ENCODE measurements at regions of chr1 and their contacts with region 1.

Region 1: DNA sequence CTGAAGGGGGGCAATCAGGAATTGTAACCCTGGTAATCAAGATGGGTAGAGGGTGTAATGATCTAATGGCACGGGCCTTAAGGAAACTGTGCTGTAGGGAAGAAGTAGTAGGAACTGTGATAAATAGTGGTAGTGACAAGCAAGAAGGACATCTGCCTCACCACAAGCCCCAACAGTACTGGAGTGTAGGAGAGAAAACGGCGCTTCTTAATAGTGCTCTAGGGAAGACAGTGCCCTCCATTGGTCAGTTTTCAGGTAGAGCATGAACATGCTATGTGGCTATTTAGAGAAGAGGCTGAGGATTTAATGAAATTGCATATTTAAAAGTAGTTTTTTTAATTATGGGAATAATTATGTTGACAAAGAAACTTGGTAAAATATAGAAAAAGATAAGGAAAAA is 32.2 kb downstream of the SLC30A7 start:
- DNase-seq: no peak
- H3K4me3 ChIP-seq: peak overlapping the region in 1 of 2 donors; percentile 39
- H3K4me3 Mint-ChIP-seq: no peak overlapping the region
- H3K27ac ChIP-seq: peak overlapping the region; percentile 50
- H3K27ac Mint-ChIP-seq: no peak overlapping the region
- H3K4me1 ChIP-seq: peaks cover 95% of the 10 kb centered on the region
- H3K4me1 Mint-ChIP-seq: peaks cover 38 to 64% (median 49%) of the 10 kb centered on the region in 4 donors
- H3K27me3 ChIP-seq: no peaks in the 10 kb centered on the region
- H3K27me3 Mint-ChIP-seq: no peaks in the 10 kb centered on the region

Region 2: GRCh38 chr1:100895540-100896483 is 32.3 kb before region 1 on chr1 and contains the start of gene SLC30A7:
- CTCF ChIA-PET with region 1: no interaction called
- POLR2A ChIA-PET with region 1: interaction called, 29 read pairs
- intact Hi-C with region 1: no loop called
- DNase-seq: peak; percentile 93 to 98 (median 95)
- H3K4me3 ChIP-seq: peak within 1 kb of the TSS; percentile 96 to 98
- H3K4me3 Mint-ChIP-seq: peak within 1 kb of the TSS; percentile 94 to 100 (median 100)
- H3K27ac ChIP-seq: peak within 1 kb of the TSS; percentile 100
- H3K27ac Mint-ChIP-seq: peak within 1 kb of the TSS; percentile 99 to 100 (median 100)
- H3K4me1 ChIP-seq: peaks cover 44% of the 10 kb centered on the region
- H3K4me1 Mint-ChIP-seq: peaks cover 28 to 60% (median 39%) of the 10 kb centered on the region in 4 donors
- H3K27me3 ChIP-seq: no peaks in the 10 kb centered on the region
- H3K27me3 Mint-ChIP-seq: no peaks in the 10 kb centered on the region
- total RNA-seq, gene SLC30A7: 54.9 TPM

Region 3: DNA sequence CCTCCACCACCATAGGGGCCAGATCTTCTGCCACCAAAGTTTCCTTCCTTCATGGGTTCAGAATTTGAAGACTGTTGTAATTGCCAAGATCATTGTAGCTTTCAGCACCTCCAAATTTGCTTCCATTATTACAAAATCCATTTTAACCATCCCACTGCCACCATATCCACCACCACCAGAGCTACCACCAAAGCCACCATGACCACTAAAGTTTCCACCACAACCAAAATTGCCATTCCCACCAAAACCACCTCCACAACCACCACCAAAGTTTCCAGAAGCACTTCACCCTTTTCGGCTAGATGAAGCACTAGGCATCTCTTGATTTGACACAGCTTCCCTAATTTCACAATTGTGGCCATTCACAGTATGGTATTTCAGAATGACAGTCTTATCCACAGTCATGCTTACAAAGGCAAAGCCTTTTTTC is 13.0 kb after region 1 on chr1:
- CTCF ChIA-PET with region 1: interaction called, 3 read pairs
- POLR2A ChIA-PET with region 1: interaction called, 17 read pairs
- intact Hi-C with region 1: no loop called
- DNase-seq: no peak
- H3K4me3 ChIP-seq: no peak overlapping the region
- H3K4me3 Mint-ChIP-seq: peak overlapping the region in 5 of 8 donors; percentile 16 to 60 (median 44)
- H3K27ac ChIP-seq: no peak overlapping the region
- H3K27ac Mint-ChIP-seq: peak overlapping the region in 4 of 7 donors; percentile 15 to 88 (median 67)
- H3K4me1 ChIP-seq: peaks cover 26% of the 10 kb centered on the region
- H3K4me1 Mint-ChIP-seq: peaks cover 39 to 67% (median 51%) of the 10 kb centered on the region in 4 donors
- H3K27me3 ChIP-seq: no peaks in the 10 kb centered on the region
- H3K27me3 Mint-ChIP-seq: no peaks in the 10 kb centered on the region

Region 4: GRCh38 chr1:100955322-100955721 is 27.2 kb after region 1 on chr1:
- CTCF ChIA-PET with region 1: interaction called, 8 read pairs
- POLR2A ChIA-PET with region 1: interaction called, 61 read pairs
- intact Hi-C with region 1: loop called (anchors 5 kb)
- DNase-seq: no peak
- H3K4me3 ChIP-seq: no peak overlapping the region
- H3K4me3 Mint-ChIP-seq: peak overlapping the region in 1 of 8 donors; percentile 26
- H3K27ac ChIP-seq: no peak overlapping the region
- H3K27ac Mint-ChIP-seq: no peak overlapping the region
- H3K4me1 ChIP-seq: peaks cover 25% of the 10 kb centered on the region
- H3K4me1 Mint-ChIP-seq: peaks cover 38 to 60% (median 43%) of the 10 kb centered on the region in 4 donors
- H3K27me3 ChIP-seq: no peaks in the 10 kb centered on the region
- H3K27me3 Mint-ChIP-seq: no peaks in the 10 kb centered on the region

Region 5: DNA sequence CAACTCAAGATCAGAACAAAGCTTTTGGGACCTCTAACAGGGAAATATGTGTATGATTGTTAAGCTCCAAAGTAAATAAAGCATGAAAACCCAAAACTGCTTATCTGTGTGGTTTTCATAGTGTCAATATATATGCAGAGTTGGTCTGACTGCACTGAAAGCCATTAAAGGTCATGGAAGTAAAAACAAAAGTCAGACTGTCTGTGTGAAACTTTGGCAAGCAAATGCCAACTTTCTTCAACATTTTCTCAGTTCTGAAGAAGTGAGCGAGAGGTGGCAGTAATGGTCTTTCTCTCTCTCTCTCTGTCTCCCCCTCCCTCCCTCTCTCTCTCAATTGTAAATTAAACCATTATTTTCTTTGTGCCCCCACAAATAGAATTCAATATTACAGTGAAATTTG is 208.6 kb after region 1 on chr1:
- CTCF ChIA-PET with region 1: no interaction called
- POLR2A ChIA-PET with region 1: no interaction called
- intact Hi-C with region 1: loop called (anchors 1 kb)
- DNase-seq: peak in 3 of 5 donors; percentile 26 to 40 (median 32)
- H3K4me3 ChIP-seq: no peak overlapping the region
- H3K4me3 Mint-ChIP-seq: peak overlapping the region in 5 of 8 donors; percentile 26 to 67 (median 37)
- H3K27ac ChIP-seq: no peak overlapping the region
- H3K27ac Mint-ChIP-seq: peak overlapping the region; percentile 42 to 92 (median 77)
- H3K4me1 ChIP-seq: peaks cover 36% of the 10 kb centered on the region
- H3K4me1 Mint-ChIP-seq: peaks cover 32 to 57% (median 41%) of the 10 kb centered on the region in 4 donors
- H3K27me3 ChIP-seq: no peaks in the 10 kb centered on the region
- H3K27me3 Mint-ChIP-seq: no peaks in the 10 kb centered on the region